Common myeloid progenitor, CD34-positive (primary cell): ENCODE measurements at regions of chr13 and their contacts with region 1.

Region 1: GRCh38 chr13:76667551-76667950 is 218.7 kb downstream of the KCTD12 start:
- DNase-seq: peak; percentile 70 to 87 (median 87)
- H3K4me3 ChIP-seq: no peak overlapping the region
- H3K27ac ChIP-seq: no peak overlapping the region
- H3K4me1 ChIP-seq: peaks cover 0 to 7% (median 0%) of the 10 kb centered on the region in 4 experiments
- H3K27me3 ChIP-seq: no peaks in the 10 kb centered on the region

Region 2: GRCh38 chr13:76680112-76680511 is 12.6 kb after region 1 on chr13:
- CTCF ChIA-PET with region 1: interaction called, 21 read pairs
- POLR2A ChIA-PET with region 1: no interaction called
- DNase-seq: no peak
- H3K4me3 ChIP-seq: no peak overlapping the region
- H3K27ac ChIP-seq: no peak overlapping the region
- H3K4me1 ChIP-seq: no peaks in the 10 kb centered on the region
- H3K27me3 ChIP-seq: no peaks in the 10 kb centered on the region

Region 3: DNA sequence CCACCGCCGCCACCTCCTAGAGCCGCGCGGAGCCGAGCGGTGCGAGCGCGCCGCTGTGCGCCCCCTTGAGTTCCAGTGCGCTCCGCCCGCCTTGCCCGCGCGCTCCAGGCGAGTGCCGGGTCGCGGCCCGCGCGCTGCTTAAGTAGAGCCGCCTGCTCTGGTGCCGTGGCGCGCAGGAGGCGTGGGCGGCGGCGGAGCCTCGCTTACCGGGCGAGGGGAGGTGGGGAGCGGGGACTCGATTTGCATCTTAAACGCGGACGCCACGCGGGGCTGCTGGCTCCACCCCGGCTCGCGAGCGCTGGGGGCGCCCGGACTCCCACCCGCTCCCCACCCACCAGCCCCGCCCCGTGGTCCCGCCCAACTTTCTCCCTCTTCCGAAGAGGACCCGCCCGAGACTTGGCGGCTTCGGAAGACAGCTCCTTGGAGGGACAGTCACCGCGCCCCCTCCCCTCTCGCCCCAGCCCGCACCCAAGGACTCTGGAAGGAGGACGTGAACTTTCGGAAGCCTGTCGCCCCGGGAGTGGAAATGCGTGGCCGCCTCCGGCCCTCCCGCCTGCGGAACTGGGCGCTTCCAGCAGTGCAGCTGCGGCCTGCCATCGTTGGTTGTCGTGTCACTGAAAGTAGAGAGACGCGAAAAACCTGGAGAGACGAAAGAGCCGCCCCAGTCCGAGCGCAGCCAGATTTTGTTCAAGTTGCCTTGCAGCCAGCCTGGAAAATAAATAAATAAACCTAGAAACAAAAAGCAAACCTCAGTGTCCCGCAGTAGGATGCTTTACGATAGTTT is 218.9 kb after region 1 on chr13 and contains the start of gene KCTD12:
- CTCF ChIA-PET with region 1: interaction called, 56 read pairs
- POLR2A ChIA-PET with region 1: no interaction called
- DNase-seq: peak; percentile 84 to 93 (median 88)
- H3K4me3 ChIP-seq: peak within 1 kb of the TSS; percentile 35 to 81 (median 73)
- H3K27ac ChIP-seq: no peak within 1 kb of the TSS
- H3K4me1 ChIP-seq: peaks cover 6 to 33% (median 27%) of the 10 kb centered on the region in 4 experiments
- H3K27me3 ChIP-seq: peaks cover 0 to 9% (median 4%) of the 10 kb centered on the region in 5 experiments

Region 4: GRCh38 chr13:76894401-76895110 is 227.0 kb after region 1 on chr13:
- CTCF ChIA-PET with region 1: interaction called, 151 read pairs
- POLR2A ChIA-PET with region 1: interaction called, 3 read pairs
- DNase-seq: peak in 2 of 3 donors; percentile 36 to 43
- H3K4me3 ChIP-seq: no peak overlapping the region
- H3K27ac ChIP-seq: no peak overlapping the region
- H3K4me1 ChIP-seq: peaks cover 0 to 8% (median 5%) of the 10 kb centered on the region in 4 experiments
- H3K27me3 ChIP-seq: peaks cover 0 to 2% (median 0%) of the 10 kb centered on the region in 5 experiments

Region 5: GRCh38 chr13:76903544-76904162 is 236.1 kb after region 1 on chr13:
- CTCF ChIA-PET with region 1: interaction called, 151 read pairs
- POLR2A ChIA-PET with region 1: no interaction called
- DNase-seq: peak; percentile 81 to 90 (median 87)
- H3K4me3 ChIP-seq: no peak overlapping the region
- H3K27ac ChIP-seq: no peak overlapping the region
- H3K4me1 ChIP-seq: no peaks in the 10 kb centered on the region
- H3K27me3 ChIP-seq: peaks cover 0 to 2% (median 0%) of the 10 kb centered on the region in 5 experiments

Region 6: DNA sequence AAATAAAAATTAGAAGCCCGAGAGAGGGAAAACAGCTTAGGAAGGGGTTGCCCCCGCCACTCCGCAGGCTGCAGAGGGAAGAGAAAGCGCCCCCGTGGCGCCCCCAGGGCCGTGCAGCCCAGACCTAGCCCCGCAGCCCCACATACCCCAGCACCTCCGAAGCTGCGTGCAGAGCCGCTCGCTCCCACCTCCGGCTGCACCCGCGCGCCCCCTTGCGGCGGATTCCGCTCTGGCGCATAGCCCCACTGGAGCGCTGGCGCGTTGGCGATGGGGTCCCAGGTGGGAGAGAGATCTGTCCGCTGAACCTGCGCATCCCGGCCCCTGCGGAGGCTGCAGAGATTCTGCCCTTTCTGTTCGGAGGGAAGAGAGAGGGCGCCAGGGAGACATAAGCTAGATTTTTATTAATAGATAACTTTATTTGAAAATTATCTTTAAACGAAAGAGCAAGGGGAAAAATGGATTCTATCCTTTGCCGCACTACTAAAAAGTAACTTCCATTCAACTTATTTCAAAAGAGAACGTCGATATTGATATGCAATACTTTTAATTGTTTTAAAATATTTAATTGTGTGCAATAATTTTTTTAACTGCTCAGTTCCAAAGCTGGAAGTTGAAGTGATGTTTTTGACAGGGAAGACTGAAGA is 312.6 kb after region 1 on chr13:
- CTCF ChIA-PET with region 1: interaction called, 21 read pairs
- POLR2A ChIA-PET with region 1: no interaction called
- DNase-seq: peak; percentile 54 to 78 (median 76)
- H3K4me3 ChIP-seq: peak overlapping the region in 4 of 7 experiments; percentile 29 to 63 (median 44)
- H3K27ac ChIP-seq: no peak overlapping the region
- H3K4me1 ChIP-seq: peaks cover 0 to 14% (median 5%) of the 10 kb centered on the region in 4 experiments
- H3K27me3 ChIP-seq: peaks cover 0 to 13% (median 4%) of the 10 kb centered on the region in 5 experiments

Region 7: DNA sequence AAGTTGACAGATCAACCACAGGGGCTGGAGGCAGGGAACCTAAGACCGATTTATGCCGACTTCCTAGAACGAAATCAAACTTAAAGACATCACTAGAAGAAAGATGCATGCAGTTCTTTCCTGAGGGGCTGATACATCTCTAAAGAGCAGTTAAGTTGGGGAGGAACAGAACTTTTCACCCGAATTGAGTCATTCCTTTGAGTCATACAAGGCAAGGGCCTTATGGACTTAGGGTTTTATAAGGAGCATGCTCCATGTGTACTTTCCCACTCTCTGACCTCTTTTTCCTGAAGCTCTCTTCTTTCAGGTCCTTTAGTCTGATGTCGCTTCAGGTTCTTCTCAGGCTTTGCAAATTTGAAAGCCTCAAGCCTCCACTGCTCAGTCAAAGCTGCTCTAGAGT is 367.3 kb after region 1 on chr13:
- CTCF ChIA-PET with region 1: no interaction called
- POLR2A ChIA-PET with region 1: no interaction called
- DNase-seq: no peak
- H3K4me3 ChIP-seq: no peak overlapping the region
- H3K27ac ChIP-seq: no peak overlapping the region
- H3K4me1 ChIP-seq: peaks cover 0 to 7% (median 3%) of the 10 kb centered on the region in 4 experiments
- H3K27me3 ChIP-seq: no peaks in the 10 kb centered on the region